ENCODE measurements at regions of chr18 and their contacts with region 1.

Region 1: DNA sequence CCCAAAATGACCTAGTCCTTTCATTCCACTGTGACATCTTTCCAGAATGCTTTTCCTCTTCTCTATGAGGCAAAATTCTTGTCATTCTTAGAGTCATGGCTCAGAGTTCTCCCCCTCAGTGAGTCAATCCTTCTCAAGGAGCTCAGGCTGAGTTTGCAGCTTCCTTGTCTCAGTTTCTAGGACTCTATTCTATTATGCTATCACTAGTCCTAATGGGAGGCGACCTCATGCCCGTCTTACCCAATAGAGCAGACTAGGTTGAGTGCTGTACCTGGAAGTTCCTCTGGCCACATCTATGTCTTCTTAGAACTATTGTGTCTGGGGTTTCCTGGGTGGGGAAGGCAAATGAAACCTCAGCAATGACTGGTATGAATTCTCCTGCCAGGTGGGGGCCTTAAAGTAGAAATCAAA is 51.5 kb downstream of the HAUS1 start:
- DNase-seq: no peak
- ATAC-seq: no peak

Region 2: DNA sequence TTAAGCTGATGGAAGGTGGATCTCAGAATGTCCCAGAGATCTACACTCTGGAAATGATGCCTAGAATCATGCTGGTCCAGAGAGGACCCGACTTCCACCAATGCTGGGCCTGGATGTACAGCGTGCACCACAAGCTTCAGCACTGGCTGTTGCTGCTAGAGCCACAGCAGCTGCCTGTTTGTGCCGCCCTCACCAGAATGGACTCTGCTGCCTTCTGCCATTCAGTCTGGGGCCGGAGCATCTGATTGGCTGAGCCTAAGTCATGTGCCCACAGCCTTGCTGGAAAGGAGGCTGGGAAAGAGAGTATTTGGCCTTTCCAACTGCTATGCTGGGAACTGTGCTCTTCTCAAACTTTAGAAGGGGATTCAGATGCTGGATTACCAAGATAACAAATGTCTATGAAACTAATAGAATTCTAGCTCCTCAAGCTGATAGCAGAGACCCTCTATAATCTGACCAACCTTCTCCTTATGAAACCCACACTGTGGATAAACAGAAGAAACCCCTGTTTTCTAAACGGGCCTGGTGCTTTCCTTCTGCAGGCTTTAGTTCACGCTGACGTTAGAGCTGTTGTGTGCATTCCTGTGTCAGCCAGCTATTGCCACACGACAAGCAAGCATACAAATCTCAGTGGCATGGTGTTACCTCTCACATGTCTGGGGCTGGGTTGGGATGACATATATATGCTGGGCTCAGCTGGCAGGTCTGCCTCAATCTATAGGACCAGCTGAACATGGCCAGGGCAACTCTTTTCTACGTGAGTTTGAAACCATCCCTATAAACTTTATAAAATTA is 505.5 kb after region 1 on chr18:
- intact Hi-C with region 1: loop called (anchors 10 kb)
- DNase-seq: no peak
- ATAC-seq: no peak

Region 3: GRCh38 chr18:47968006-47968676 is 1812.5 kb after region 1 on chr18:
- intact Hi-C with region 1: loop called (anchors 10 kb)
- DNase-seq: no peak
- ATAC-seq: no peak

Measured in sciatic nerve (tissue), 2 donors.